ENCODE measurements at regions of chr21 and their contacts with region 1.

Region 1: GRCh38 chr21:25313829-25314228 is 293.5 kb downstream of the MRPL39 start:
- DNase-seq: no peak
- H3K4me3 ChIP-seq: no peak overlapping the region
- CTCF ChIP-seq: peak; percentile 23

Region 2: DNA sequence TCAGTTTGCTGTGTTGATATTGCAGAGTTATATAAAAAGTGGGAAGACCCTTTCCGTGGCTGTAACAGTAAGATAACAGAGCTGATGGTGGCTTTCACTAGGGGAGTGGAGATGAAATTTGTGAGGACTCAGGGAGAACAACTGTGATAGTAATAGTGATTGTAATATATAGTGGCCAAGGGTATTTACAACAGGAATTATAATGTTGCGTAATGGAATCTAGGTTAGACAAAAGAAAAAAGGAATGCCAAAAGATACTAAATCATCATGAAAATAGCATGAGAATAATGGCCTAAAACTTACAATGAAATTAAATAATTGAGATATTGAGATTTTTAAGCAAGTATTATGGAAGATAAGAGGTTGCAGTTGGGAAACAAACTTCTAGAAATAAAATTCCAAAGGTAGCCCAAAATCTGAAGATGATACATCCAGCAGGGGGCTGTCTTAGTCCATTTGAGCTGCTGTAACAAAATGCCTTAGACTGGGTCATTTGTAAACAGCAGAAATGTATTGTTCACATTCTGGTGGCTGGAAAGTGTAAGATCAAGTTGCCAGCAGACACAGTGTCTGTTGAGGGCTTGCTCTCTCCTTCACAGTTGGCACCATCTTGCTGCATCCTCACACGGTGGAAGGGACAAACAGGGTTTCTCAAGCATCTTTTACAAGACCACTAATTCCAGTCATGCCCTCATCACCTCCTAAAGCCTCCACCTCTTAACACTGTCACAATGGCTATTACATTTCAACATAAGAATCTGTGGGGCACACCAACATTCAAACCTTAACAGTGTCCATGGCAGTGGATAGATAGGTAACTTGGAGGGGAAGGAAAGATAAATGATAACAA is 417.7 kb before region 1 on chr21:
- CTCF ChIA-PET with region 1: interaction called, 29 read pairs
- POLR2A ChIA-PET with region 1: no interaction called
- DNase-seq: no peak
- H3K4me3 ChIP-seq: no peak overlapping the region
- CTCF ChIP-seq: peak; percentile 51

Region 3: DNA sequence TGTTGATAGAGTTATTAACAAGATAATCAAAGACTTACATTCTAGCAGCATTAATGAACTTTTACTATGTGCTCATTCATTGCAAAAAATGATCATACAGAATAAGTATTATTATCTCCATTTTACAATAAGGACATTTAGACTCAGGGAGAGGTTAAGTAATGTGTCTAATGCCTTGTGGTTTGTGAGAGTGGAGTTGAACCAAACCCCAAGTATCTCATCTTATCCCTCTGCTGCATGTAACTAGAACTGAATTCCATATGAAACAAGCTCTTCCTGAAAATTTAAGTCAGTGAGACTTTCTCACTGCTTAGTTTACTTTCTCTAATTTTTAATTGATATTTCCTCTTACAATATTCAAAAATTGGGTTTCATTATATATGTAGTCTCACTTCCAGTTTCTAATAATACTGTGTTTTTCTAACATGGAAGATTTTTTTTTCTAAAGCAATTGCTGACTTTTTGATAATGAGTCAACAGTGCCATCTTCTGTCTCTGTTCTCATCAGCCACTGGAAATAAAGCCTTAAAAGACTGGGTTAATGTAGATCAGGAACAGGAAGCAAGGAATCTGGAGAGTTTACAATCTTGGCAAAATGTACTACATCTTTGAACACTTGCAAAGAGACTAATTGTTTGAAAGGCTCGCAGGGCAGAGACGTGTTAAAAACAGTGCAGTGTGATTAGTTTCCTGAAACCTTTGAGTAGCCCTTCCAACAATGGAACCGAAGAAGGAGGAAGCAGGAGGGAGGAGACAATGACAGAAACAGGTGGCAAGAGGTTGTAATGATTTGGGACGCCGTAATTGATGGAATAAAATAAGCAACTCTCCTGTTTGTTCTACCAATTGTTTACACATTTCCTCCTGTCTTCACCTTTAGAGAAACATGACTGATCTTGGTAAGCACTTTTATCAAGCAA is 274.1 kb before region 1 on chr21:
- CTCF ChIA-PET with region 1: interaction called, 11 read pairs
- POLR2A ChIA-PET with region 1: no interaction called
- DNase-seq: no peak
- H3K4me3 ChIP-seq: no peak overlapping the region
- CTCF ChIP-seq: no peak

Region 4: DNA sequence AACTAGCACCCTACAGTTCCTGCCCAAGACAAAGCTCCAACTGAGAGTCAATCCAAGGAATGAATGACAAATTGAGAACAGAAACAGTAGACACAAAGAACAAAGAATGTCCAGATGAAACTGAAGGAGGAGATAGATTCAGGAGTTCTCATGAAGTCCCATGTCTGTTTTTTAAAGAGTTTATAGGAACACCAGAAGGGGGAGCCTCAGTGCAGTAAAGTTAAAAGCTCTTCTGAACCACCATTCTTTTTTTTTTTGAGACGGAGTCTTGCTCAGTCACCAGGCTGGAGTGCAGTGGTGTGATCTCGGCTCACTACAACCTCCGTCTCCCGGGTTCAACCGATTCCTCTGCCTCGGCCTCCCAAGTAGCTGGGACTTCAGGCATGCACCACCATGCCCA is 30.1 kb before region 1 on chr21:
- CTCF ChIA-PET with region 1: interaction called, 13 read pairs
- POLR2A ChIA-PET with region 1: no interaction called
- DNase-seq: no peak
- H3K4me3 ChIP-seq: no peak overlapping the region
- CTCF ChIP-seq: peak; percentile 32

Region 5: DNA sequence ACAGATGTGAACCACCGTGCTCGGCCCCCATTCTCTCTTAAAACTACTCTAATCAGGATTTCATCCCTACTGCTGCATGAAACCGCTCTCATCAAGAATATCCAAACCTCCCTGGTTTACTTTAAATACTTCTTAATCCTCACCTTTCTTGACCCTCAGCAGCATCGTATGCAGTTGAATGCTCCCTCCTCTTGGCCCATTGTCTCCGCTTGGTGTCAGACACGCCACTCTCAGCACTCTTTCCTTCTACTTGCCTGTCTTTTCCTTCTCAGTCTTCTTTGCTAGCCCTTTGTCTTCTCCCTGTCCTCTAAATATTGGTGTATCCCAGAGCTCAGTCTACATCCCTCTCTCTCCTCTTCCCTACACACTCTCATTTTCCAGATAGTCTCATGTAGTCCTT is 21.4 kb before region 1 on chr21:
- CTCF ChIA-PET with region 1: interaction called, 13 read pairs
- POLR2A ChIA-PET with region 1: no interaction called
- DNase-seq: no peak
- H3K4me3 ChIP-seq: no peak overlapping the region
- CTCF ChIP-seq: no peak

Measured in AG04449 (cell line).